ENCODE measurements at regions of chr1 and their contacts with region 1.

Region 1: GRCh38 chr1:210311726-210312493 is 16.8 kb upstream of the HHAT start:
- DNase-seq: peak in 1 of 2 donors; percentile 74
- H3K4me3 ChIP-seq: no peak overlapping the region
- CTCF ChIP-seq: no peak
- POLR2A ChIP-seq: no peak

Region 2: GRCh38 chr1:209860293-209860881 is 451.5 kb before region 1 on chr1:
- intact Hi-C with region 1: loop called (anchors 10 kb)
- DNase-seq: peak; percentile 55 to 91
- H3K4me3 ChIP-seq: no peak overlapping the region
- CTCF ChIP-seq: no peak
- POLR2A ChIP-seq: no peak

Region 3: DNA sequence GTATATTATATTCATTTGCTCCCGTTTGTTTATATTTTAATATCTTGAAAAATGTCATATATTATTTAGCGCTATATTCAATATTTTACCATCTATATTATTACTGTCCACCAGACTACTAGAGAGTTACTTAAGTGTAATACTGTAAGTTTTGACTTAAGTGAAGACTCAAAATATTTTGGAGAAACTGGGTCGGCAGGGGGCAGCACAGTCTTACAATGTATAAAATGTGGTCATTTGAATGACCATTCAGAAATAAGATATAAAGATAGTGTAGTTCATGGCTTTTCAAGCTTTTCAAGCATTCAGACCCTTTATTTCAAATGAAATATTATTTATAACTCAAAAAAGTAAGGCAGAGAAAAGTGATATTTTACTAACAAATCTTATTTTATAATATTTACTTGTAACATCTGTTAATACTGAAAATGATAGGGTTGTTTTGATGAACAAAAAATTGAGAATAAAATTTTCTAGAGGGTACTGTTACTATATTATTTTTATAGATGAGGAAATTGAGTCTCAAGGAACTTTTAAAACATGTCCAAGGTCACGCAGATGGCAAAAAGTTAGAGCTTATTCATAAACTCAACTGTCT is 168.3 kb before region 1 on chr1:
- intact Hi-C with region 1: loop called (anchors 5 kb)
- DNase-seq: peak; percentile 65 to 91
- H3K4me3 ChIP-seq: no peak overlapping the region
- CTCF ChIP-seq: no peak
- POLR2A ChIP-seq: no peak

Region 4: DNA sequence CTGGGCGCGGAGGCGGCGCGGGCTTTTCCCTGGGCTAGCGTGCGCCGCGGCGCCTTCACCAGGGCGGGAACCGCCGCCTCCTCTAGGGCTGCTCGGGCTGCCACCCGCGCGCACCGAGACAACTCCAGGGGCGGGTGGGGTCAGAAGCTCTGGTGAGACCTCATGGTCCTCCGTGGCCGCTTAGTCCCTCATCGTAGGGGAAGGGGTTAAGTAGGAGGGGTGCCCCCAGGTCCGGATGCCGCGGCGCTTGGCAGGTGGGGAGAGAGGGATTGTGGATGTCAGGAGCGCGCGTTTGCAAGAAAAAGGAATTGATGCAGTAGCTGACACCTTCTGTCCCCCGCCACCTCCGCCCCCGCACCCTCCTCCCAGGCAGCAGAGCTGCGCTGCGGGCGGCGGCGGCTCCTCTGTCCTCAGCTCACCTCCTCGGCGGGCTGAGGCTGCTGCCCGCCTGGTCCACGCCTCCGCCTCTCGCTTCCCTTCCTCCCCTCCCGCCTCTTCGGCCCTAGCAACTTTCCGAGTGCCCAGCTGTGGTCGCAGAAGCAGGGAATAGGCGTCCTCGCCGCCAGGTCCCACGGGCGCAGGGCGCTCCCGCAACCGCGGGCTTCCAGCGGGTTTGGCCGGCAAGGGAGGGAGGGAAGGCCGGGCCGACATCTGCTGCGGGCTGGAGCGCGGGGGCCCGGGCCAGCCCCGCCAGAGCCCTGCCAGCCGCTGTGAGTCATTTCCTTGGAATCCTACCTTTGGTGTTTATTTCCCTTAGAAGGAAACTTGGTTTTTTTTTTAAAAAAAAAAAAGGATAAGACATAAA is 78.5 kb before region 1 on chr1:
- intact Hi-C with region 1: loop called (anchors 10 kb)
- DNase-seq: no peak
- H3K4me3 ChIP-seq: peak overlapping the region; percentile 48
- CTCF ChIP-seq: no peak
- POLR2A ChIP-seq: no peak

Measured in lower leg skin (tissue), 4 donors.